AG04450 (cell line): ENCODE measurements at regions of chr5 and their contacts with region 1.

Region 1: DNA sequence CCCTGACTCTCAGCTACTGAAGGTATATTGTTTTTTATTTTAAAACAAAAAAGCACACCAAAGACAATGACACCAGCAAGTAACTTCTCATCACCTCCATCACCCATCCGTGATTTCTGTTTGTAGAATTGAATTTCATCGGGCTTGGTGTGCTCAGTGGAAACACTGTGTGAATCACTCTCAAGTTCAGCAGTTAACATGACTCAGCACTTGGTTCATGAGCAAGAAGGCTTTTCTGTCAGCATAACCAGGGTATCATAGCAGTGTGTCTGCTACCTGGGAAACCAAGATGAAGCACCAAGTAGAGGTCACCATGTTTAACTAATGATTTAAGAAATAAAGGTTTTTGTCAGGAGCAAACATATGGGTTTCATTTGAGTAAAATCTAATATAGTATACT is 123.7 kb downstream of the INSYN2B start:
- DNase-seq: peak; percentile 63
- H3K4me3 ChIP-seq: no peak overlapping the region
- H3K27ac ChIP-seq: peak overlapping the region; percentile 31
- H3K27me3 ChIP-seq: no peaks in the 10 kb centered on the region
- CTCF ChIP-seq: no peak

Region 2: DNA sequence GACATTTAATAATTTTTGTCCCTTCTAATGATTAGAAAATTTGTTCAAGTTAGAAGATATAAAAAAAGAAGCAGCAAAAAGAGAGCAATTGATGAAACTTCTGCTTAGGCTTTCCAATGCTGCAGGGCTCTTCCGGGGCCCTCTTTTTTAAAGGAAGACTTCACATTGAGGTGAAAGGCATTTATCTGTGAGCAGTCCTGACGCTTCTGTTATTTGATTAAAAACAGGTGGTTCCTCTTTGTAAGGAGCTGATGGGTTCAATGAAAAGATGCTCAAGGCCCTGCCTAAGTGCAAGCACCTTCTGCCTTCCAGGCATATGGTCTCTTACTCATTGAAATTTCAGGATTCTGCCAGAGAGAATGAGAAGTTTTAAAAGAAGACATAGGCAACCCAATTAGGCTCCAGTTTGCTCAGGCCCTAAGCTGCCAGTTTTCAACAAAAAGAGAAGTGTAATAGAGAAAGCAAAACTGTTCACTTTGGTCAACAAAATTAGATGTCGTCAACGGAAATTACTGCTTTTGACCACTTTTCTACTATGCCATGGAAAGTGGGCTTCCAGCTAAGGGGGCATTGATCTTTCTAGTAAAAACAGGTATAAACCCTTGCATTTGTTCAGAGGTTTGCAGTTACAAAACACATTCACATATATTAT is 23.6 kb after region 1 on chr5:
- CTCF ChIA-PET with region 1: no interaction called
- POLR2A ChIA-PET with region 1: interaction called, 15 read pairs
- DNase-seq: no peak
- H3K4me3 ChIP-seq: no peak overlapping the region
- H3K27ac ChIP-seq: no peak overlapping the region
- H3K27me3 ChIP-seq: no peaks in the 10 kb centered on the region
- CTCF ChIP-seq: no peak